Activated CD8-positive, alpha-beta T cell treated with anti-CD3 and anti-CD28 coated beads for 36 hours (primary cell): ENCODE measurements at regions of chr11 and their contacts with region 1.

Region 1: DNA sequence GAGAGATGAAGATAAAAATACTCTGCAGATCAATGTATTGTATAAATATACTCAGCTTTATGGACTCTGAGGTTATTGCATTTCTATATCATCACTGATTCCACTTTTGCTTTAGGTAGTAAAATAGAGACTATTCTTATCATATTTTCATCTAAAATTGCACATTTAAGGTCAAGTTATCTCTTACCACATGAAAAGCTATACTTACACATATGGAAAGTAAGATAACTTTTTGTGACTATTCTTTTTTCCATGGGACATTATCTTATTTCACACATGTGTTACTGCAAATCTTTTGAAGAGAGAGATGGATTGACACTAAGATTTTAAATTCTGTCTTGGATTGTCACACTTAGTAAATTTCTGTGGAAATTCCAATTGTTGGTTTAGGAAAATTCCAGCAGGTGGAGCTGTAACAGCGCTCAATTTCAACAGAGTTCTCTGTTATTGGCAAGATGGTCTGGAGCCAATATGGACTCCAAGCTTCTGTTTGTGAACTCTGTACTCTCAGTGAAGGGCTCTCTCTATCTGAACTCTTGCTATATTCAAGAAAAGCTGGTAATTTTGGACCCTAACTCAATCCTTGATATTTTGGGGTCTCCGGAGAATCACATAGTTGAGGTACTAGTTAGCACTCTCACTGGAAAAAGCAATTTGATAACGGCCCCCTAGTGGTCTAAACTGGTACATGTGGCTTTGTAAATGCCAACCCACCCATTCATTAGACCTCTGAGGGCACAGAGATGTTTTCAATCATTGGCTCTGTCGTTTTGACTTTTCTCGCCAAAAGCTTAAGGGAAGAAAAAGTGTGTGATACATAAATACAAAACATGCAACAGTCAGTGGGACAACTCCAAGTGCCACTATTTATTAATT is 429.7 kb downstream of the ETS1 start:
- DNase-seq: peak; percentile 79
- ATAC-seq: peak; percentile 90
- H3K4me3 Mint-ChIP-seq: peak overlapping the region; percentile 63
- H3K27ac Mint-ChIP-seq: peak overlapping the region; percentile 84
- H3K4me1 Mint-ChIP-seq: peaks cover 11% of the 10 kb centered on the region
- H3K27me3 Mint-ChIP-seq: no peaks in the 10 kb centered on the region
- CTCF ChIP-seq: peak; percentile 100

Region 2: DNA sequence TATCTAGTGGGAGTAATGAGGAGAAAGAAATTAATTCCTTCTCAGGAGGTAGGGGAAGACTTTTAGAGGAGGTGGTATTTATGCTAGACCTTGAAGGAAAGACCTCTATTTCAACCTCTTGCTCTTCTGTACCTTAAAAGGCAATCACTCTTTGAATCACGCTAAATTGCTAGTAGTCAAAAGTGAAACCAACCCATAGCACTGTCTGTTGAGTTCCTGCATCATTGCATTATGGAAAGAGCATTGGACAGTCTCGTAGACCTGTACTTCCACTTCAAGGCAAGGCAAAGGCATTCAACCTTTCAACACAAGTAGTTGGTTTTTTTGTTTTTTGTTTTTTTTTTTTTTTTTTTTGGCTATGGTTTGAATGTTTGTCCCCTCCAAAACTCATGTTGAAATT is 340.7 kb before region 1 on chr11:
- CTCF ChIA-PET with region 1: no interaction called
- POLR2A ChIA-PET with region 1: no interaction called
- intact Hi-C with region 1: no loop called
- DNase-seq: no peak
- ATAC-seq: no peak
- H3K4me3 Mint-ChIP-seq: no peak overlapping the region
- H3K27ac Mint-ChIP-seq: no peak overlapping the region
- H3K4me1 Mint-ChIP-seq: no peaks in the 10 kb centered on the region
- H3K27me3 Mint-ChIP-seq: peaks cover 4% of the 10 kb centered on the region
- CTCF ChIP-seq: no peak

Region 3: GRCh38 chr11:128026596-128026995 is 131.1 kb before region 1 on chr11:
- CTCF ChIA-PET with region 1: interaction called, 97 read pairs
- POLR2A ChIA-PET with region 1: interaction called, 3 read pairs
- intact Hi-C with region 1: loop called (anchors 1 kb)
- DNase-seq: no peak
- ATAC-seq: no peak
- H3K4me3 Mint-ChIP-seq: no peak overlapping the region
- H3K27ac Mint-ChIP-seq: no peak overlapping the region
- H3K4me1 Mint-ChIP-seq: peaks cover 6% of the 10 kb centered on the region
- H3K27me3 Mint-ChIP-seq: no peaks in the 10 kb centered on the region
- CTCF ChIP-seq: no peak

Region 4: DNA sequence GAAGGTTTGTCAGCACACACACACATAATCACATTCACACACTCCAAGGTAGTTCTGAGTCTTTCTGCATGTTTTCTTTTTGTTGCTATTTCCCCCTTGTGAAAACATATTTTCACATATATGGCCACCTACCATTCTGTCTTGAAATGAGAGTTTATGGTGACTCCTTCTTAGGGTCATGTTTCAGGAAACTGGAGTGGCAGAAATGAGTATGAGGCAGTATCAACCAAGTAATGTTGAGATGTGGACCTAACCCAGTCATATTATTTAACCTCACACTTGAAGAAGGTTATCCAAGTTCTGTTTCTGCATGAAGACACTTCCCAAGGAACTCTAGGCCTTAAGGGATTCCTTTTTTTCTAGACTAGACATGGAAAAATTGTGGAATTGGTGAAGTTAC is 51.7 kb before region 1 on chr11:
- CTCF ChIA-PET with region 1: interaction called, 10 read pairs
- POLR2A ChIA-PET with region 1: no interaction called
- intact Hi-C with region 1: no loop called
- DNase-seq: no peak
- ATAC-seq: no peak
- H3K4me3 Mint-ChIP-seq: no peak overlapping the region
- H3K27ac Mint-ChIP-seq: no peak overlapping the region
- H3K4me1 Mint-ChIP-seq: peaks cover 13% of the 10 kb centered on the region
- H3K27me3 Mint-ChIP-seq: peaks cover 2% of the 10 kb centered on the region
- CTCF ChIP-seq: no peak

Region 5: DNA sequence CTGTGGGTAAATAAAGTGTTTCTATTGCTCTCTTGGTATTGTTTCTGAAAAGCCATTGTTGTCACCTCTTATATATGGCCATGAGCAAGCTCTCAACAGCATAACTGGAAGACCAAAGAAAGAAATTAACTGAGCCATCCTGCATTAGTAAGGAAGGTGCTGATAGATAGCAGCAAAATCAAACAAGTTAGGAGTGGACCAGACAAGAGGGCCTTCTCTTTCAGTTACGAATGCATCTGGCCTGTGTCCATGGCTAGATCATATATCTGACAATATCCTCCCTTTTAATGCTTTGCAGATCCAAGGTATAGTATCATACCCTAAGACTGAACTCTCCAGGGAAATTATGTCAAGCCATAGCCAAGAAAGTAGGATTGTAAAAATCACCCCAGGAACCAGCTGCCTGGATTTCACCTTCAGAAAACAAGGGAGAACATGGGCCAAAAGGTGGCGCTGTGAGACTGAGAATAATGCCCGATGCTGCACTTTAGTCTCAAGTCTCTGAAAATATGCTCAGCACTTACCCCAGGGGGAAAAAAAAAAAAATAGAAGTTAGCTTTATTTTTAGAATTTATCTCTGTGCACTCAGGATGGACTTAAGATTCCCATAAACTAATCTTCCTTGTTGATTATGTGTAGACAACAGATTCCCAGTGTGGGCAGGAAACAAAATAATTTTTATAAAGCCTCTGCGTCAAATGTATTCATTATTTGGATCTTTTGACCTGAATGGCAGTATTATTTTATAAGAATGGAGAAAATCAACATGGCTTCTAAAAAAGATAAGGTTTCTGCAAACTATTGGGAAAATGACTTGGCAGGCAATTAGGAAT is 14.6 kb after region 1 on chr11:
- CTCF ChIA-PET with region 1: interaction called, 155 read pairs
- POLR2A ChIA-PET with region 1: interaction called, 3 read pairs
- intact Hi-C with region 1: no loop called
- DNase-seq: peak; percentile 96
- ATAC-seq: peak; percentile 81
- H3K4me3 Mint-ChIP-seq: no peak overlapping the region
- H3K27ac Mint-ChIP-seq: no peak overlapping the region
- H3K4me1 Mint-ChIP-seq: peaks cover 16% of the 10 kb centered on the region
- H3K27me3 Mint-ChIP-seq: no peaks in the 10 kb centered on the region
- CTCF ChIP-seq: peak; percentile 69

Region 6: DNA sequence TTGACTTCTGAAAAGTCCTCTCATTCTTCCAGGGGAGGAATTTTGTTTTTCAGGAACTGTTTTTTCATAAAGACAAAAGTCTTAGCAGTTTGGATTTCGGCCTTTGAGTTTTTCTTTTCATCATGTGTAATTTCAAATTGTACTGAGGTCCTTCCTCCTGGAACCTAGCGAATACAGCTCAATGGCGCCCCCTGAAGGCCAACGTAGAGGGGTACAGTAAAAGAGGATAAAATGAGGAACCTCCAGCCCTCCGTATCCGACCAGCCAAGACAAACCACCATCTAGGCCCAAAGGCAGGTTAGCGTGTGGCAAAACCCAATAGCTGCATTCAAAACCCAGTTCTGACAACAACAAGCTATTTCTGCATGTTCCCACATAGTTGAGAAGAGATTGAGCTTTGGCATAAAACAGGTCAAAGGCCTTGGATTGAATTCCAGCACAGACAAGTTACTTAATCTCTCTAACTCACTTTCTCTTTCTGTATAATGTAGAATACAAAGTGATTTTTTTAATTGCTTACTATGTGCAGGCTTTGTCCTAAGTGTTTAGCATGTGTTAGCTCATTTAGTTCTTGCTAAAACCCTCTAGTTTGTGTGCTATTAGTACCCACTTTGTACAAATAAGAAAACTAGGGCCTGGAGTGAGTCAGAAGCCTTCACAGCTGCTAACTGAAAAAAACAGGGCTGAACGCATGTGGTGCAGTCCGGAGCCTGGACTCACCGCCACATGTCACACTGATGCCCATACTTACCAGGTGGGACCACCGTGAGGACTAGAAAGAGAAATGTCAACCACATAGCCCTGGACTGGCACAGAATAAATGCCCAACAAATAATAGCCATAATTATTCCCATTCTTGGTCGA is 472.9 kb after region 1 on chr11:
- CTCF ChIA-PET with region 1: interaction called, 96 read pairs
- POLR2A ChIA-PET with region 1: interaction called, 3 read pairs
- intact Hi-C with region 1: no loop called
- DNase-seq: peak; percentile 94
- ATAC-seq: peak; percentile 71
- H3K4me3 Mint-ChIP-seq: peak overlapping the region; percentile 72
- H3K27ac Mint-ChIP-seq: peak overlapping the region; percentile 97
- H3K4me1 Mint-ChIP-seq: peaks cover 66% of the 10 kb centered on the region
- H3K27me3 Mint-ChIP-seq: no peaks in the 10 kb centered on the region
- CTCF ChIP-seq: peak; percentile 72

Region 7: DNA sequence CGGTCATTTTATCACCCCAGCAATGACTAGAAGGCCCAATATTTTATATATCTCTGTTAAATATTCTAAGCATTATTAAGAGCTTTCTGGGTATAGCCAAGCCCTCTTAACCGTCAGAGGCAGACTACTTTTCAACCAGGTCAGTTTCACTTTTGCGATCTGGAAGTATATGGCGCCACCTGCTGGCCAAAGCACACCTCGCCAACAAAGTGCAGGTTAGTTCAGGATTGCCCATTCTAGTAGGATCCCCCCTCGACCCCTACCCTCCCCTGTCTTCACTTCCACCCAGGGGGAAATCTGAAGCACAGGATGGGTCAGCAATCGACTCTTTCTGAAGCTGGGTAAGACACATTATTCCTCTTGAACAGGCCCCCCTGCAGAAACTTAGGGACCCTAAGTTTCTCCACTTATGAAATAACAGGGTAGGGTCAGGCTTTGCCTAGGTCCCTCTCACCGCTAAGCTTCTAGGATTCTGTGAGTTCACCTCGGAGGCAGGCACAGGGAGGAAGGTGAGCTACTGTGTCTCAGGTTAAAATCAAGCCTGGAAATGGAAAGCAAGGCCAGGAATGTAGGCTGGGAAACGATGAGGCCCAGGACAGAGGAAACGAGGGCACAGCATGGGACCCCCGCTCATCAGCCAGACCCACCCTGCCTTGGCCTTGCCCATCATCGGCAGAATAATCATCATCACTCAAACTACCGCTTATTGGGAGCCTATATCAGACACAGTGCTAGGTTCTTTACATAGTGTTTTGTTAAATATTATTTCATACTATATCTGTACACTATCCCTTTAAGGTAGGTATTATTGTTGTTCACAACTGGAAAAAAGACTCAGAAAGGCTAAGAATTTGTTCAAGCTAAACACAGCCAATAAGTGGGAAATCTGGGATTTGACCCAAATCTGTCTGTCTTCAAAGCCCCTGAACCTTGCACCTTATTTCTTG is 673.8 kb after region 1 on chr11:
- CTCF ChIA-PET with region 1: interaction called, 51 read pairs
- POLR2A ChIA-PET with region 1: no interaction called
- intact Hi-C with region 1: loop called (anchors 5 kb)
- DNase-seq: peak; percentile 92
- ATAC-seq: peak; percentile 85
- H3K4me3 Mint-ChIP-seq: peak overlapping the region; percentile 52
- H3K27ac Mint-ChIP-seq: peak overlapping the region; percentile 92
- H3K4me1 Mint-ChIP-seq: peaks cover 26% of the 10 kb centered on the region
- H3K27me3 Mint-ChIP-seq: no peaks in the 10 kb centered on the region
- CTCF ChIP-seq: peak; percentile 82